Calu3 (cell line): ENCODE measurements at regions of chr5 and their contacts with region 1.

Region 1: DNA sequence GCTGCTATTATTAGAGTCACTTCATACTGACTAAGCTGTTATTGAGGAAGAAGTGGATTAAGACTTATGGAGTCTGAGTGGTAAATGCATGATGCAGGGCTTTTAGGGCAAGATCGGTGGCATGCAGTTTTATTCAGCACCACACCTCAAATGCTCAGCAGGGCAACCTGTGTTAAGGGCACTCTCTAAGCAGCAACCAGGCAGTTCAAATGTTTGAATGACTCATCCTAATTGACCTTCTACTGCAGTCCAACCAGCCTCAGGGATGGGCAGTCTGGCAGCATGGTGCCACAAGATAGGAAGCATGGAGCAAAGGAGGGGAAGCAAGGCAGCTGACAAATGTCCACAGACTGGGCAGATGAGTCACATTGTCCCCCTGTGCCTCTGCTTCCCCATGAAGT is 80.2 kb upstream of the MIER3 start:
- DNase-seq: peak; percentile 60
- H3K4me3 Mint-ChIP-seq: no peak overlapping the region
- H3K27ac Mint-ChIP-seq: peak overlapping the region; percentile 34
- H3K4me1 Mint-ChIP-seq: peaks cover 62% of the 10 kb centered on the region
- H3K27me3 Mint-ChIP-seq: no peaks in the 10 kb centered on the region
- CTCF ChIP-seq: no peak

Region 2: DNA sequence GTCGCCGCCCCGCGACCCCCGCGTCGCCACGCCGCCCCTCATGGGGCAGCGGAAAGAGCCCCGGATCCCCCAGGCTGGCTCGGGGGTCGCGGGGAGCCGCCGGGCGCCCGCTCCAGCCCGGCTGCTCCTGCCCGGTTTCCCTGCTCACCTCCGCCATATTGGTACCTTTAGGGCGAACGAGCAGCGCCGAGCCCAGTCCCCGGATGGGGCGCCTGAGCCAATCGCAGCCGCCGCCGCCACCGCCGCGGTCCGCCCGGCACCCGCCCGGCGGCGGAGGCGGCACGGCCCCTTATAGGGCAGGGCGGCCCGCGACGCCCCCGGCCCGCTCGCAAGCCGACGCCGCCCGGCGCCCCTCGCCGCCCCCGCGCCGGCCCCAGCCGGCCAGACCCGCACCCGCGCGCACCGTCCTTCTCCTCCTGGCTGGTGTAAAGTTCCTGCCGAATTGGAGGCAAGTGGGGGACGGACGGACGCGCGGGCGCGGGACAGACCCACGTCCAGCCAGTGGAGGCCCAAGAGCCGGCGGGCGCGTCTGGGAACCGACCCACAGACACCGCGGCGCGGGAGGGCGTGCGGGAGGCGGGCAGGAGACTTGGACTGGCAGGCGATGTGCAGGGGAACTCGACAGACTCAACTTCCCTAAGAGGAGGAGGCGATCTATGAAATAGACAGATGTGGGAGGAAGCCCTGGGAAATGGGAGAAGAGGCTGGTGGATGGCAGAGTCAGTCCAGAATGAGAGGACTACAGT is 80.0 kb before region 1 on chr5 and contains the start of gene MIER3:
- CTCF ChIA-PET with region 1: no interaction called
- intact Hi-C with region 1: loop called (anchors 5 kb)
- DNase-seq: peak; percentile 83
- H3K4me3 Mint-ChIP-seq: peak within 1 kb of the TSS; percentile 82
- H3K27ac Mint-ChIP-seq: peak within 1 kb of the TSS; percentile 28
- H3K4me1 Mint-ChIP-seq: peaks cover 22% of the 10 kb centered on the region
- H3K27me3 Mint-ChIP-seq: no peaks in the 10 kb centered on the region
- CTCF ChIP-seq: no peak
- total RNA-seq, gene MIER3: 24.1 and 26.3 TPM in 2 replicates